ENCODE measurements at regions of chr10 and their contacts with region 1.

Region 1: GRCh38 chr10:27223964-27224363 is 16.6 kb downstream of the ACBD5 start:
- DNase-seq: no peak
- CTCF ChIP-seq: peak; percentile 71

Region 2: DNA sequence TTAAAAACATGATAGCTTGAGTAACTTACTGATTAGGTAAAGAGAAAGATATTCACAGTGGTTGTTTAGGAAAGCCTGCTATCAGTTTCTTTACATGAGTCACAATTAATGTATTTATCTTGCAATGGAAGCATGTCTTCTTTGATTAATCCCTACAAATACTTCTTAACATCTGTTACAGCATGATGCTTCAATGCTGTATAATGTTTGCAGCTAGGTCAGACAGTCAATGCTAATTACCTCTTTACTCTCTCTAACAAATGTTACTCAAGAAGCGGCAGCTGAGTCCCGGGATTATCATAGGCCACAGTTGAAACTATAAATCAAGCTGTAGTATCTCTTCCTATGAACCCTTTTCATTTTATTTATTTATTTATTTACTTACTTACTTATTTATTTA is 16.6 kb before region 1 on chr10:
- CTCF ChIA-PET with region 1: interaction called, 20 read pairs
- POLR2A ChIA-PET with region 1: no interaction called
- DNase-seq: no peak
- CTCF ChIP-seq: no peak

Region 3: DNA sequence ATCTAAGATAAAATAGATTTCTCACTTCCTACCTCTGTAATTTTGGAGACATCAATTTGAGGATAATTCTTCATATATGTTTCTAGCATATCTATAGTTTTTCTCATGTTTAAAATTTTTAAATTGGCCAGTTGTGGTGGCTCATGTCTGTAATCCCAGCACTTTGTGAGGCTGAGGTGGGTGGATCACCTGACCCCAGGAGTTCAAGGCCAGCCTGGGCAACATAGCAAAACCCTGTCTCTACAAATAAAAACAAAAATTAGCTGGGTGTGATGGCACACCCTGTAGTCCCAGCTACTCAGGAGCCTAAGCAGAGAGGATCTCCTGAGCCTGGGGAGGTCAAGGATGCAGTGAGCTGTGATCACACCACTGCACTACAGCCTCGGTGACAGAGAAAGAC is 11.7 kb after region 1 on chr10:
- CTCF ChIA-PET with region 1: interaction called, 48 read pairs
- POLR2A ChIA-PET with region 1: no interaction called
- DNase-seq: no peak
- CTCF ChIP-seq: no peak

Region 4: GRCh38 chr10:27241652-27242472 is 17.9 kb after region 1 on chr10:
- CTCF ChIA-PET with region 1: interaction called, 48 read pairs
- POLR2A ChIA-PET with region 1: no interaction called
- DNase-seq: peak; percentile 88
- CTCF ChIP-seq: peak; percentile 16

Region 5: DNA sequence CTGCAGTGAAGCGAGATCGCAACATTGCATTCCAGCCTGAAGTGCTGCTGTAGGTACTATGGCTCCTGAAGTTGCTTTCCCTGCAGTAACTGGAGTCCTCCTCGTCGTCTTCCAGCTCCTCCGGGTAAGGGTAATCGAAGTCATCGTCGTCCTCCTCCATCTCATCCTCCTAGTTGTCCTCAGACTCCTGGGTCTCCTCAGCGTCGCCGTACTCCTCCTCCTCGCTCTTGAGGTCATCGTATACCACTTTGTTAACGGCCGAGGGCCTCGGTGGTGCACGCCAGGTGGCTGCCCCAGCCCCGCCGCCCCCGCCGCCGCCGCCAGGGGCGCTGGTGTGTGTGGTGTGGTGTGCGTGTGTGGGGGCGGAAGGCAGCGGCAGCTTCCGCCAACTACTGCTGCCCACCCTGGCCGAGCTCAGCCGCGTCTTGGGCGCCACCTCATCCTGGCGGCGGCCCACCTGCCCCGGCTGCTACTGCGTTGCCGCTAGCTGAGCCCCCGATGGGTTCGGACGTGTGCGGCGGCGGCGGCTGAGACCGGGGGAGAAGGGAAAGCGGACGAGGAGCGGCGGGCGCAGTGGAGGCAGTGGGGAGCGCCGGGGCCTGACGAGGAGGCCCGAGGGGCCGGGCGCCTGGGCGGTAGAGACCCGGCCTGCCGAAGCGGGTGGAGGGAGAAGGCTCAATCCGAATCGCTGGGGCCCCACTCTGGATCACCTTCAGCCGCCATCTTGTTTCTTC is 28.5 kb after region 1 on chr10:
- CTCF ChIA-PET with region 1: interaction called, 12 read pairs
- POLR2A ChIA-PET with region 1: no interaction called
- DNase-seq: peak; percentile 85
- CTCF ChIP-seq: peak; percentile 25

Measured in GM10248 (cell line).